Activated T-helper 2 cell treated with anti-CD3 and anti-CD28 coated beads, Interferon-gamma antibody, Interleukin-2, Interleukin-4, amounts not matched to agents 10 μg/mL and 5 μg/mL and 100 μg/mL, durations not matched to agents 14 hours and 24 hours and 36 hours (primary cell): ENCODE measurements at regions of chr18 and their contacts with region 1.

Region 1: DNA sequence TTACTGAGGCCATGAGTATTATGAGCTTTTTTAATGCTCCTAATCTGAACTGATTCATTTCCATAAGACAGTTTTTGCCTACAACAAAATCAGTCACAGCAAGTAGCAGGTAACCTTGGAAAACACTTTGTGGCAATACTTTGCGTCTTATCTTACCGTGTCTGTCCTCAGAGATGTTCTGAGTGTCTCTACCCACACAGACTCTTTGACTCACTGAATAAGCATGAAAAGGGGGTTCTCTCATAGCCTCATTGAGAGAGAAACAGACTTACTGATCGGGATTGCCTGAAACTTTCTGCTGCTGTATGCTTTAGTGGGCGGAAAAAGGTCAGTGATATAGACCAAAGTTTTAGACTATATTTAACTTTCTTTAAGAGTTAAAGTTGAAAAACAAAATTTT is 92.6 kb downstream of the MYL12B start:
- DNase-seq: no peak
- H3K4me3 Mint-ChIP-seq: no peak overlapping the region
- H3K27ac Mint-ChIP-seq: peak overlapping the region; percentile 83
- H3K4me1 Mint-ChIP-seq: peaks cover 35% of the 10 kb centered on the region
- H3K27me3 Mint-ChIP-seq: no peaks in the 10 kb centered on the region

Region 2: GRCh38 chr18:2197945-2198344 is 1156.6 kb before region 1 on chr18:
- intact Hi-C with region 1: no loop called
- DNase-seq: no peak
- H3K4me3 Mint-ChIP-seq: no peak overlapping the region
- H3K27ac Mint-ChIP-seq: no peak overlapping the region
- H3K4me1 Mint-ChIP-seq: no peaks in the 10 kb centered on the region
- H3K27me3 Mint-ChIP-seq: no peaks in the 10 kb centered on the region

Region 3: DNA sequence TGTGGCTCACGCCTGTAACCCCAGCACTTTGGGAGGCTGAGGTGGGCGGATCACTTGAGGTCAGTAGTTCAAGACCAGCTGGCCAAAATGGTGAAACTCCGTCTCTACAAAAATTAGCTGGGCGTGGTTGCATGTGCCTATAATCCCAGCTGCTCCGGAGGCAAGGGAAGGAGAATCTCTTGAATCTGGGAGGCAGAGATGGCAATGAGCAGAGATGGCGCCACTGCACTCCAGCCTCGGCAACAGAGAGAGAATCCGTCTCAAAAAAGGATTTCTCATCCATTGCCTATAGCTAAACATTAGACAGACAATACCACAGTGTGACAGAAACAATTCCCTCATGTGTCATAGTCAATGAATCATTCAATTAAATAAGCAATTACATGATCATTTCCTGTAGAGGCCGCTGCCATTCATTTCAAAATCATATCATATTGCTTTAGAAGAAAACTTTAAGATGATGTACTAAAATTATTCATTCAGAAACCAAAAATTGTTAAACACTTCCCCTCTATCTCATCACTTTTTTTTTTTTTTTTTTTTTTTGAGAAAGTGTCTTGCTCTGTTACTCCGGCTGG is 26.0 kb after region 1 on chr18:
- intact Hi-C with region 1: loop called (anchors 1 kb)
- DNase-seq: no peak
- H3K4me3 Mint-ChIP-seq: no peak overlapping the region
- H3K27ac Mint-ChIP-seq: no peak overlapping the region
- H3K4me1 Mint-ChIP-seq: peaks cover 4% of the 10 kb centered on the region
- H3K27me3 Mint-ChIP-seq: no peaks in the 10 kb centered on the region